AG04450 (cell line): ENCODE measurements at regions of chr10 and their contacts with region 1.

Region 1: DNA sequence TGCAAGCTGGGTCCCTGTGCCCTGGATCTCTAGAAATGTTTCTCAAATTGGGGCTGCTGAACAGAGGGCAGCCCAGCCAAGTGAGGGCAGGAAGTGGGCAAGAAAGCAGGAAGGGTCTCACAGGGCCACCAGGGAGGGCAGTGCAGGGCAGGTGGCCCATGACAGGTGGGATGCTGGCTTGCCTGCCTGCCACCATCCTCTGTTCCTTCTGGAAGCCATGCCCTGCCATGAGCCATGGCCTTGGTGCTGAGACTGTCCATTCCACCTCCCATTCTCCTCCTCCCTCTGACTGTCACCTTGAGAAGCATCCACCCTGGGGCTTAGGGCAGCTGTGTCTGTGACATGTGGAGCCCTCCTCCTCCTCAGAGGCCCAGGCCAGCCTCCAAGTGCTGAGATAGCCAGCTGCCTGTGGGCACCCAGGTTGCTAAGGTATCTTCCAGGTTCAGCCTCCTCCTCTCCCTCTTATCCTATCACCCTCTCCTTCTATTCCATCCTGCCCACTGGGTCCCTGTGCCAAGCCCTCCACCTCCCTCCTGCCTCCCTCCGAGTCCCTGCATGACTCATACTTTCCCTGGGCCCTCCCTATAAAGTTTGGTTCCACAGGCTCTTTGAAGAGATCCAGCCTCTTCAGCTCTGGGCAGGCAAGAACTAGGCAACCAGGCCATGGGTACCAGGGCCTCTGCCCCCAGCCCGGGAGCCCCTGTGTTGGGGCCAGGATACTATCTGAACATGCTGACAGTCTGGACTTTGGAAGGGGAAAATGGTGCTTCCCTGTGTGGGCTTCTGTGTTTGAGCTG is 1.3 kb downstream of the VSIR start:
- DNase-seq: no peak
- H3K4me3 ChIP-seq: peak overlapping the region; percentile 70
- H3K27ac ChIP-seq: peak overlapping the region; percentile 39
- H3K27me3 ChIP-seq: no peaks in the 10 kb centered on the region
- CTCF ChIP-seq: no peak

Region 2: GRCh38 chr10:71756311-71757191 is 15.5 kb before region 1 on chr10:
- CTCF ChIA-PET with region 1: interaction called, 3 read pairs
- POLR2A ChIA-PET with region 1: interaction called, 15 read pairs
- DNase-seq: no peak
- H3K4me3 ChIP-seq: no peak overlapping the region
- H3K27ac ChIP-seq: no peak overlapping the region
- H3K27me3 ChIP-seq: peaks cover 4% of the 10 kb centered on the region
- CTCF ChIP-seq: no peak